Activated B cell treated with CpG ODN at 0.5 μM for 24 hours (primary cell): ENCODE measurements at regions of chr13 and their contacts with region 1.

Region 1: GRCh38 chr13:31044377-31045285 is 112.2 kb downstream of the TEX26 start:
- DNase-seq: peak; percentile 51
- ATAC-seq: peak; percentile 99
- H3K4me3 Mint-ChIP-seq: peak overlapping the region; percentile 4
- H3K27ac Mint-ChIP-seq: no peak overlapping the region
- H3K4me1 Mint-ChIP-seq: peaks cover 21% of the 10 kb centered on the region
- H3K27me3 Mint-ChIP-seq: peaks cover 28% of the 10 kb centered on the region
- CTCF ChIP-seq: peak; percentile 34

Region 2: GRCh38 chr13:29472332-29472961 is 1572.2 kb before region 1 on chr13:
- CTCF ChIA-PET with region 1: no interaction called
- POLR2A ChIA-PET with region 1: no interaction called
- intact Hi-C with region 1: loop called (anchors 10 kb)
- DNase-seq: no peak
- ATAC-seq: peak; percentile 72
- H3K4me3 Mint-ChIP-seq: peak overlapping the region; percentile 24
- H3K27ac Mint-ChIP-seq: no peak overlapping the region
- H3K4me1 Mint-ChIP-seq: peaks cover 7% of the 10 kb centered on the region
- H3K27me3 Mint-ChIP-seq: peaks cover 6% of the 10 kb centered on the region
- CTCF ChIP-seq: peak; percentile 91

Region 3: GRCh38 chr13:30355384-30355699 is 689.3 kb before region 1 on chr13:
- CTCF ChIA-PET with region 1: no interaction called
- POLR2A ChIA-PET with region 1: no interaction called
- intact Hi-C with region 1: loop called (anchors 5 kb)
- DNase-seq: peak; percentile 61
- ATAC-seq: peak; percentile 100
- H3K4me3 Mint-ChIP-seq: peak overlapping the region; percentile 45
- H3K27ac Mint-ChIP-seq: peak overlapping the region; percentile 77
- H3K4me1 Mint-ChIP-seq: peaks cover 32% of the 10 kb centered on the region
- H3K27me3 Mint-ChIP-seq: no peaks in the 10 kb centered on the region
- CTCF ChIP-seq: no peak

Region 4: DNA sequence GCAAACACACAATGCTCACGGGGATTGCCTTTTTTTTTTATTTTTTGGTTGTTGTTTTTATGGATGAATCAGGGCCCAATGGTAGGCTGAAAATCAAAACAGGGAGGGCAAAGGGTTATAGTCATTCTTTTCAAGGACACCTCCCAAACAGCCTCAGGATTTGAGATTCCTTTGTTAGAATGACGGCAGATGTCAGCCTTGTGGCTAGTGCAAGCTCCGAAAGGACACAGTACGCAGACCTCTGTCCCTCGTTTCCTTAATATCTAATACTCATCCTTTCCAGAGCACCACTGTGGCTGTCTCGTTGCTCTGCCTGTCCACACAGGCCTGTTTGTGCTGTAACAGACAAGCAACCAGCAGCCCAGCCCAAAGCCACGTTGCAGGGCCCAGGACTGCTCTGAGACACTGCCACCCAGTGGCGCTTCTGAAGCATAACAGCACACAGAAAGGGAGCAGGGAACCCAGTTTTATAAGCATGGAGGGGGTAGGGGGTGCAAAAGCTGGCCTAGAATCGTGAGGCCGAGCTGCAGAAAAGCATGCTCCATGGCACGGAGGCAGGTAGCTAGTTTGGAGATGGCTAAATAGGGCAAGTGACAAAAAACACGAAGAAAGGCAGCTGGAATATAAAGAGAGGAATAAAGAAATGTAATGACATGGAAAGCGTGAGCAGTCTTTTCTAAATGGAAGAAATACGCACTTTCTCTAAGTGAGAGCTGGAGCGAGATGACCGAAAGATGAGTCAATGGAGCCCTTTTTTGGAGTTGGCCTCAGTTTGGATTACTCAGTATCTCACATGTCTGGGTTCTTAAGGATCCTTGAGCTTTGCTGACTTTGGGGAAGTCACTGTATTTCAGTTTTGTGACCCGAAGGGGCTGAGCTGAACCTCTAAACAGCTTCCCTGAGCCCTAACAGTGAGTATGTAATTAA is 179.2 kb before region 1 on chr13:
- CTCF ChIA-PET with region 1: interaction called, 4 read pairs
- POLR2A ChIA-PET with region 1: no interaction called
- intact Hi-C with region 1: loop called (anchors 5 kb)
- DNase-seq: peak; percentile 29
- ATAC-seq: peak; percentile 96
- H3K4me3 Mint-ChIP-seq: no peak overlapping the region
- H3K27ac Mint-ChIP-seq: no peak overlapping the region
- H3K4me1 Mint-ChIP-seq: peaks cover 1% of the 10 kb centered on the region
- H3K27me3 Mint-ChIP-seq: peaks cover 13% of the 10 kb centered on the region
- CTCF ChIP-seq: peak; percentile 66

Region 5: DNA sequence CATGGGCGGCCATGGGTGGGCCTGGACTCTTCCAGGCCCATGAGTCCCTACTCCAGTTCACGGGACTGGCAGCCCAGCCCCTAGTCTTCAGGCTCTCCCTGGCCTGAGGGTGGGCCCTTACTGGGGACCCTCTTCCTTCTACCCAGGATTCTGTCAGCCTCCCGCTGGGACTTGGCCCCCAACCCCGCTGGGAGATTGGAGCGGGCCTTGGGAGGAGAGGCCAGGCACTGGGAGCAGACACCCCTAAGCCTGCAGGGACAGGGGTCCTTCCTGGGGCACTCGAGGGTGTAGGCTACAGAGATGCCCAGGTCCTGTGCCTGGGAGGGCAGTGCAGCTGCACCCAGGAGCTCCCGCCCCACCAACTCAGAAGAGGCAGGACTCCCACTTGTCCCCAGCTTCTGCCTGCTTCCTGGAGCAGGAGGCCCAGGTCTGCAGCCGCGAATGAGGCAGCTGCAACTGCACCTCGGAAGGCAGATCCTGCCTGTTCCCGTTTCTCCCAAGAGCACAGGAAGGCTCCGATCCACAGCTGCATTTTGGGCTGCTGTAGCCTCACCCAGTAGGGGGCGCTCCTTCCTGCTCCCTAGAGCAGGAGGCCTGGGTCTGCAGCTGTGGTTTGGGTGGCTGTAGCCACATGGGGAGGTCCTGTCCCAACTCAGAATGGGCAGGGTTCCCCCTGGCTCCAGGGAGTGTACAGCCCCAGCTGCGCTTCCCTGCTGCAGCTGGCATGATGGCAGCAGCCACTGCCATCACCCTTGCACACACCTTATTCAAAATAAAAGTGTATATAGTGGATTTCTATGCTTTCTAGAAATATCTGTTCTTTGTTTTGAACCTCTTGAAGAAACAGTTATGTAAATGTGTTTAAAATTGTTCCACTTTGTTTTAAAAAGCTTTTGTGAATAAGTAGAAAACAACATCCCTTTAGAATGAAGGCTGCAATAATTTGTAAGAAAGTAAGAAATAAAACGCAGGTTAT is 65.4 kb before region 1 on chr13:
- CTCF ChIA-PET with region 1: interaction called, 3 read pairs
- POLR2A ChIA-PET with region 1: no interaction called
- intact Hi-C with region 1: loop called (anchors 1 kb)
- DNase-seq: no peak
- ATAC-seq: no peak
- H3K4me3 Mint-ChIP-seq: no peak overlapping the region
- H3K27ac Mint-ChIP-seq: no peak overlapping the region
- H3K4me1 Mint-ChIP-seq: no peaks in the 10 kb centered on the region
- H3K27me3 Mint-ChIP-seq: peaks cover 9% of the 10 kb centered on the region
- CTCF ChIP-seq: no peak

Region 6: DNA sequence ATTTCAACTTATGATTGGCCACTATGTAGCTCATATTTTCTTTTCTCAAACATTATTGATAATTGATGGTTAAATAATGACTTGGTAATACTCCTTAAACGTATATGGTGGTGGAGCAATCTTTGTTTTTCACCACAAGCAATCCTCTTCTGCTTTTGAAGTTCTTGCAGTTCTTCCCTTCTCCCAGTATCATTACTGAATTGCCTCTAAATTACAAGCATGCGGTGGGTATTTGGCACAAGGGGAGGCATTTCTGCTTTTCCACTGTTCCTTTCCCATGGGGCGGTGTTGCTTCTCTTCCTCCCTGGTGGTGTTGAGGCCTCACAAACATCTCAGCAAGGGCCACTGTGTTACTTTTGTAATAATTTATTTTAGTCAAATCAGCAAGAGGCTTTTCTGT is 460.3 kb after region 1 on chr13:
- CTCF ChIA-PET with region 1: no interaction called
- POLR2A ChIA-PET with region 1: no interaction called
- intact Hi-C with region 1: no loop called
- DNase-seq: no peak
- ATAC-seq: no peak
- H3K4me3 Mint-ChIP-seq: no peak overlapping the region
- H3K27ac Mint-ChIP-seq: no peak overlapping the region
- H3K4me1 Mint-ChIP-seq: no peaks in the 10 kb centered on the region
- H3K27me3 Mint-ChIP-seq: peaks cover 2% of the 10 kb centered on the region
- CTCF ChIP-seq: no peak